ENCODE measurements at regions of chr17 and their contacts with region 1.

Region 1: GRCh38 chr17:3683054-3683511 is 12.9 kb downstream of the P2RX5 start:
- DNase-seq: peak; percentile 58
- ATAC-seq: peak; percentile 75
- H3K4me3 Mint-ChIP-seq: peak overlapping the region; percentile 58
- H3K27ac Mint-ChIP-seq: peak overlapping the region; percentile 83
- H3K4me1 Mint-ChIP-seq: peaks cover 46% of the 10 kb centered on the region
- H3K27me3 Mint-ChIP-seq: no peaks in the 10 kb centered on the region
- CTCF ChIP-seq: peak; percentile 72

Region 2: GRCh38 chr17:3602499-3602898 is 80.6 kb before region 1 on chr17:
- CTCF ChIA-PET with region 1: no interaction called
- POLR2A ChIA-PET with region 1: no interaction called
- intact Hi-C with region 1: loop called (anchors 2 kb)
- DNase-seq: no peak
- ATAC-seq: peak; percentile 58
- H3K4me3 Mint-ChIP-seq: no peak overlapping the region
- H3K27ac Mint-ChIP-seq: no peak overlapping the region
- H3K4me1 Mint-ChIP-seq: peaks cover 4% of the 10 kb centered on the region
- H3K27me3 Mint-ChIP-seq: no peaks in the 10 kb centered on the region
- CTCF ChIP-seq: no peak

Region 3: GRCh38 chr17:3695723-3696411 is 12.8 kb after region 1 on chr17 and contains the start of gene P2RX5:
- CTCF ChIA-PET with region 1: interaction called, 16 read pairs
- POLR2A ChIA-PET with region 1: interaction called, 78 read pairs
- intact Hi-C with region 1: loop called (anchors 1 kb)
- DNase-seq: peak; percentile 66
- ATAC-seq: peak; percentile 58
- H3K4me3 Mint-ChIP-seq: peak within 1 kb of the TSS; percentile 99
- H3K27ac Mint-ChIP-seq: peak within 1 kb of the TSS; percentile 97
- H3K4me1 Mint-ChIP-seq: peaks cover 77% of the 10 kb centered on the region
- H3K27me3 Mint-ChIP-seq: no peaks in the 10 kb centered on the region
- CTCF ChIP-seq: no peak
- total RNA-seq, gene P2RX5: 295 and 349 TPM in 2 replicates

Region 4: DNA sequence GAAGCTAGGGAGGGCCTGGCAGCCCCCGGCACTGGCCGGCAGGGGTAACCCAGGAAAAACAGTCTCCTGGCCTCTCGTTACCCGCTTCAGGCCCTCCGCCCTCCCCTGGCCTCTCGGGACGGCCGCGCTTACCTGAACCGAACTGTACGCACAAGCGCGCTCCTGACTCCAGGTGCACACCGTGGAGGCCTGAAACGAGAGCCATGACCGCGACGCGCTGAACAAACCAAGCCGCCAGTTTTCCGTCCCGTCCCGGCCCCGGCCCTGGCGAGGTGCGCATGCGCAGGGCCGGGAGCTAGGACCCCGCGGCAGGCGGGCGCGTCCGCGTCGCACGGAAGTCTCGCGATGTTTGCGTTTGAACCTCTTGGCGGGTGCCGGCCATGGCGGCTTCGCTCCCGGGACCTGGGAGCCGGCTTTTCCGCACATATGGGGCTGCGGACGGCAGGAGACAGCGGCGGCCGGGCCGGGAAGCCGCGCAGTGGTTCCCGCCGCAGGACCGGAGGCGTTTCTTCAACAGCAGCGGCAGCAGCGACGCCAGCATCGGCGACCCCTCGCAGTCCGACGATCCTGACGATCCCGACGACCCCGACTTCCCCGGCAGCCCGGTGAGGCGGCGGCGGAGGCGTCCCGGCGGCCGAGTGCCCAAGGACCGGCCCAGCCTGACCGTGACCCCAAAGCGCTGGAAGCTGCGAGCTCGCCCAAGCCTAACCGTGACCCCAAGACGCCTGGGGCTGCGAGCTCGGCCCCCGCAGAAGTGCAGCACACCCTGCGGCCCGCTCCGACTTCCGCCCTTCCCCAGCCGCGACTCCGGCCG is 40.7 kb after region 1 on chr17 and contains the start of gene HASPIN:
- CTCF ChIA-PET with region 1: interaction called, 18 read pairs
- POLR2A ChIA-PET with region 1: interaction called, 11 read pairs
- intact Hi-C with region 1: loop called (anchors 2 kb)
- DNase-seq: peak; percentile 91
- ATAC-seq: peak; percentile 73
- H3K4me3 Mint-ChIP-seq: peak within 1 kb of the TSS; percentile 92
- H3K27ac Mint-ChIP-seq: peak within 1 kb of the TSS; percentile 85
- H3K4me1 Mint-ChIP-seq: peaks cover 72% of the 10 kb centered on the region
- H3K27me3 Mint-ChIP-seq: no peaks in the 10 kb centered on the region
- CTCF ChIP-seq: no peak
- total RNA-seq, gene HASPIN: 6.4 and 6.7 TPM in 2 replicates

Region 5: DNA sequence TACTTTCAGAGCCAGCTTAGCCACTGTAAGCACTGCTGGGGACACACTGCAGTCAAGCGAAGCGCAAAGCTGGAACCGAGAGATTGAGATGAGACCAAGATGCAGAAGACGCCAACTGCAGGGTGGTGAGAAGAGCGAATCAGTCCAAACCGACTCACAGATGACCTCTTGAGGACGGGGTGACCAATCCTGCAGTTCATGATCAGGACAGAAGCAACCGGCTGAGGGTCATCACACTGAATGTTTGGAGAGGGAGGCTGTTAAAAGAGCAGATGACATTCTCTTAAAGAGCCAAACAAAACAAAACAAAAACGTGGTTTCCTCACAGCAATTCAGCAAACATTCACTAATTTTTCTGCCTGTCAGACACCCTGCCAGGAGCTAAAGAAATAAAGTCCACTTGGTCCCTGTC is 49.1 kb after region 1 on chr17:
- CTCF ChIA-PET with region 1: interaction called, 37 read pairs
- POLR2A ChIA-PET with region 1: interaction called, 17 read pairs
- intact Hi-C with region 1: loop called (anchors 1 kb)
- DNase-seq: no peak
- ATAC-seq: peak; percentile 91
- H3K4me3 Mint-ChIP-seq: no peak overlapping the region
- H3K27ac Mint-ChIP-seq: peak overlapping the region; percentile 27
- H3K4me1 Mint-ChIP-seq: peaks cover 40% of the 10 kb centered on the region
- H3K27me3 Mint-ChIP-seq: no peaks in the 10 kb centered on the region
- CTCF ChIP-seq: no peak

Region 6: DNA sequence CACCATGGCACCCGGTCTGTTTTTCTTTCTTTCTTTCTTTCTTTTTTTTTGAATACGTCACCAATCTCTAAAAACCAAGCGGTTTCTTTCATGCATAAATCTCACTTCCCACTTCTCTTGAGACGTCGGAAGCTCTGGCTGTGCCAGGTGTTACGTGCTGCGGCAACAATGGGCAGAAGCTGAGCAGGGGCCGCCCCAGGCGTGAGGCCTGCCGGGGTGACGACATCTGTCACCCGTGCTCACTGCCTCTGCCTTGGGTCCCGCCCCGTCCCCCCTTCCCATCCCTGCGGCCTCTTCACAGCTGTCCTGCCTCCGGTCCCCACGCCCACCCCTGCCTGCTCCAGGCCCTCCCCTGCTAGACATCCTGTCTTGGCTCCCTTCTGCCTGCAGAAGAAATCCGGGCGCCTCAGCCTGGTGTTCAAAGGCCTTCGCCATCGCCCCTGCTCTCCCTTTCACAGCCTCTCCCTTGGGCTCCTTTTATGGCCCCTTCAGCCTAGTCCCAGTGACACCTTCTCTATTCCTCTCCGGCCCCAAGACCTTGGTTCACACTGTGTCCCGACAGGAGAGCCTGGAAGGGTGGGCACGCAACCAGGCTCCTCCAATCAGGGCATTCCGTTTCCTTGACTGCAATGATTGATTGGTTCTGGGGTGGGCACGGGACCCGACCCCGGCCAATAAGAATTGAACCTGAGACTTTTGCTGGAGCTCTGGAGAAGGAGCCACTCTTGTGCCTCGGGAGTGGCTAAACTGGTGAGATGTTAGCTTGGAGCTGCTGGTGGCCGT is 228.4 kb after region 1 on chr17:
- CTCF ChIA-PET with region 1: no interaction called
- POLR2A ChIA-PET with region 1: no interaction called
- intact Hi-C with region 1: no loop called
- DNase-seq: peak; percentile 74
- ATAC-seq: peak; percentile 68
- H3K4me3 Mint-ChIP-seq: peak overlapping the region; percentile 76
- H3K27ac Mint-ChIP-seq: peak overlapping the region; percentile 96
- H3K4me1 Mint-ChIP-seq: peaks cover 84% of the 10 kb centered on the region
- H3K27me3 Mint-ChIP-seq: no peaks in the 10 kb centered on the region
- CTCF ChIP-seq: no peak